AG04449 (cell line): ENCODE measurements at regions of chr2 and their contacts with region 1.

Region 1: GRCh38 chr2:174771631-174772471 is 7.6 kb upstream of the CHRNA1 start:
- DNase-seq: no peak
- H3K4me3 ChIP-seq: no peak overlapping the region
- CTCF ChIP-seq: peak; percentile 86

Region 2: DNA sequence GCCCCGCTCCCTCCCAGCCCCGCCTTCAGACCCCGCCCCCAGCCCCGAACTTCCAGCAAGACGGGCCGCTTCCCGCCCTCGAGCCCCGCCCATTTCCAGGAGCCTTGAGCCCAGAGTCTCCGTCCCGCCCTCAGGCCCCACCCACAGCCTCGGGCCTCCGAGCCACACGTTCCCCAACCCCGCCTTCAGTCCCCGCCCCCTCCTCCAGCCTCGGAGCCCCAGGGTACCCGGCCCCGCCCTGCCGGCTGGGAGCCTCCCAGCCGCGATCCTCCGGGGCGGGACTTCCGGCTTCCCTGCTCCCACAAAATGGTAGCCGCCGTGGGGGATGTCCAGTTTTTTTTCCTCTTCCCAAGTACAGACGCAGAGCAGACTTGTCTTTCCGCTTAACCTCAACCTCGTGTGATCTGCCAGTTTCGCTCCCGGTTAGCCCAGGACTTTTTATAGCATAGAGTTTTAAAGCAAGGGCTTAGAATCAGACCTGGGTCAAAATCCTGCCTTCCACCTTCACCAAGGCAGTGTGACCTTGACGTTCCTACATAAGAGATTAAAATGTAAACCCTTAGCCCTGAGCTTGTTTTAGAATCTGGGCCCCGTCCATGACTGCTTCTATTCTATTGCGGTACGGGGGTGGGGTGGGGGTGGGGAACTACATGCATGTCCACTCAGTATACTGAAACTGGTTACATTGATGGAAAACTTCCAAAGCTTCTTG is 284.6 kb before region 1 on chr2:
- CTCF ChIA-PET with region 1: no interaction called
- POLR2A ChIA-PET with region 1: no interaction called
- DNase-seq: peak; percentile 86
- H3K4me3 ChIP-seq: peak overlapping the region; percentile 95
- CTCF ChIP-seq: no peak

Region 3: DNA sequence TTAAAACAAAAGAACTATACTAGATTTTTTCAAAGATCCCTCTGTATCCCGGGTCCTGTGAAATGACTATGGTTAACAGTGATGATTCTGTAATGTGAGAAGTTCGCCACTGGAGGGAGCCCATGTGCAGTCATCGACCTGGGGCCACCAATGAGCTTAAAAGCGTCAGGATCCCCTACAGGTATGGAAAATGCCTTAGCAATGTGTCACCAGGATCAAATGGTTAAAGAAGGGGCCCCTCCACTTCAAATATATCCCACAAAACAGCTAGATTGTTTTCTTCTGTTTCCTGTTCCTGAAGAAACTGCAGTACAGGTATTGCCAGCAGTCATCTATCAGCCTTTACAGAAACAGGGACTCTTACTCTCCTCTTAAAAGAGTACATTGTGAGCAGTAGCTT is 22.9 kb before region 1 on chr2:
- CTCF ChIA-PET with region 1: interaction called, 37 read pairs
- POLR2A ChIA-PET with region 1: no interaction called
- DNase-seq: no peak
- H3K4me3 ChIP-seq: no peak overlapping the region
- CTCF ChIP-seq: peak; percentile 72

Region 4: DNA sequence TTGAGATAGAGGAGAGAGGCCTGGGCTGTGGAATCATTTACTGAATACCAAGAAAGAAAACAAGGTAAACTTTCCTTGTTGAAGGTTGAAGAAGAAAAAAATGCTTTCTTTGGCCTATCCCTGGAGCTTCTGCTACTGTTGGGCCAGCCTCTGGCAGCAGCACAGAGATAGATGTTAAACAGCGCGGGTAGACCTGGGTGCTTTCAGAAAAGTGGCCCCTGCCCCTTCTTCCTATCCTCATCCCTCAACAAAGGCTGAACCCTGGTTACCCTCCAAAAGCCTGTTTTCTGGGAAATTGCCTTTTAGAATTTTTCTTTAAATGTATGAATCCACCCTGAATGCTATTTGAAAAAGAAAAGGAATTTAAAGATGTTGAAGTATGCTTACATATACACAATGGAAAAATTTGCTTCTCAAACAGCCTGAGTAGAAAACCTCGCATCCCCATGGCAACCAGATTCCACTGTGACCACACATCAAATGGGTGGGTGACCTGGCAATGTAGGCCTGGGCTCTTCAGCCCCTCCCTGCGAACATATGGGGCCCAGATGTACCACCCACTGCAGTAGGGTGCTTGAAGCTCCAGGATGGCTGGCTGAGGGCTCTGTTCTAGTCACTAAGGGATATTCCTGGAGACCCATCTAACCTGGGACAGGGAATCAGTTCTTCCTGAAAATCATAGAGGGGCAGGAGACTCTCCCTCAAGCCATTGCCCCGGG is 15.8 kb after region 1 on chr2:
- CTCF ChIA-PET with region 1: interaction called, 31 read pairs
- POLR2A ChIA-PET with region 1: interaction called, 17 read pairs
- DNase-seq: peak; percentile 100
- H3K4me3 ChIP-seq: no peak overlapping the region
- CTCF ChIP-seq: no peak

Region 5: GRCh38 chr2:174812037-174812436 is 40.2 kb after region 1 on chr2:
- CTCF ChIA-PET with region 1: interaction called, 32 read pairs
- POLR2A ChIA-PET with region 1: interaction called, 4 read pairs
- DNase-seq: no peak
- H3K4me3 ChIP-seq: no peak overlapping the region
- CTCF ChIP-seq: no peak

Region 6: GRCh38 chr2:174878537-174879147 is 106.8 kb after region 1 on chr2:
- CTCF ChIA-PET with region 1: interaction called, 10 read pairs
- POLR2A ChIA-PET with region 1: no interaction called
- DNase-seq: no peak
- H3K4me3 ChIP-seq: peak overlapping the region; percentile 38
- CTCF ChIP-seq: no peak

Region 7: GRCh38 chr2:174997110-174997509 is 225.3 kb after region 1 on chr2:
- CTCF ChIA-PET with region 1: interaction called, 167 read pairs
- POLR2A ChIA-PET with region 1: no interaction called
- DNase-seq: no peak
- H3K4me3 ChIP-seq: no peak overlapping the region
- CTCF ChIP-seq: no peak